CD4-positive, alpha-beta memory T cell (primary cell): ENCODE measurements at regions of chr1 and their contacts with region 1.

Region 1: GRCh38 chr1:28088168-28088961 is at the start of gene EYA3:
- DNase-seq: peak; percentile 98 to 100 (median 99)
- H3K4me3 ChIP-seq: peak within 1 kb of the TSS; percentile 93 to 99
- H3K4me3 Mint-ChIP-seq: peak within 1 kb of the TSS; percentile 93 to 98 (median 96)
- H3K27ac ChIP-seq: peak within 1 kb of the TSS; percentile 81
- H3K27ac Mint-ChIP-seq: peak within 1 kb of the TSS; percentile 87 to 99 (median 98)
- H3K4me1 ChIP-seq: peaks cover 33% of the 10 kb centered on the region
- H3K4me1 Mint-ChIP-seq: peaks cover 22 to 48% (median 36%) of the 10 kb centered on the region in 4 donors
- H3K27me3 ChIP-seq: no peaks in the 10 kb centered on the region
- H3K27me3 Mint-ChIP-seq: no peaks in the 10 kb centered on the region
- total RNA-seq, gene EYA3: 21.1 to 22.6 TPM

Region 2: GRCh38 chr1:27858072-27858958 is 230.1 kb before region 1 on chr1:
- CTCF ChIA-PET with region 1: no interaction called
- POLR2A ChIA-PET with region 1: interaction called, 3 read pairs
- intact Hi-C with region 1: loop called (anchors 2 kb)
- DNase-seq: peak; percentile 77 to 81 (median 79)
- H3K4me3 ChIP-seq: no peak overlapping the region
- H3K4me3 Mint-ChIP-seq: peak overlapping the region in 2 of 8 donors; percentile 16 to 43
- H3K27ac ChIP-seq: no peak overlapping the region
- H3K27ac Mint-ChIP-seq: peak overlapping the region in 3 of 7 donors; percentile 15 to 65 (median 43)
- H3K4me1 ChIP-seq: peaks cover 14% of the 10 kb centered on the region
- H3K4me1 Mint-ChIP-seq: peaks cover 13 to 28% (median 17%) of the 10 kb centered on the region in 4 donors
- H3K27me3 ChIP-seq: no peaks in the 10 kb centered on the region
- H3K27me3 Mint-ChIP-seq: no peaks in the 10 kb centered on the region

Region 3: GRCh38 chr1:28102189-28102588 is 13.8 kb after region 1 on chr1:
- CTCF ChIA-PET with region 1: interaction called, 12 read pairs
- POLR2A ChIA-PET with region 1: no interaction called
- intact Hi-C with region 1: no loop called
- DNase-seq: no peak
- H3K4me3 ChIP-seq: no peak overlapping the region
- H3K4me3 Mint-ChIP-seq: no peak overlapping the region
- H3K27ac ChIP-seq: no peak overlapping the region
- H3K27ac Mint-ChIP-seq: no peak overlapping the region
- H3K4me1 ChIP-seq: no peaks in the 10 kb centered on the region
- H3K4me1 Mint-ChIP-seq: no peaks in the 10 kb centered on the region
- H3K27me3 ChIP-seq: no peaks in the 10 kb centered on the region
- H3K27me3 Mint-ChIP-seq: no peaks in the 10 kb centered on the region

Region 4: DNA sequence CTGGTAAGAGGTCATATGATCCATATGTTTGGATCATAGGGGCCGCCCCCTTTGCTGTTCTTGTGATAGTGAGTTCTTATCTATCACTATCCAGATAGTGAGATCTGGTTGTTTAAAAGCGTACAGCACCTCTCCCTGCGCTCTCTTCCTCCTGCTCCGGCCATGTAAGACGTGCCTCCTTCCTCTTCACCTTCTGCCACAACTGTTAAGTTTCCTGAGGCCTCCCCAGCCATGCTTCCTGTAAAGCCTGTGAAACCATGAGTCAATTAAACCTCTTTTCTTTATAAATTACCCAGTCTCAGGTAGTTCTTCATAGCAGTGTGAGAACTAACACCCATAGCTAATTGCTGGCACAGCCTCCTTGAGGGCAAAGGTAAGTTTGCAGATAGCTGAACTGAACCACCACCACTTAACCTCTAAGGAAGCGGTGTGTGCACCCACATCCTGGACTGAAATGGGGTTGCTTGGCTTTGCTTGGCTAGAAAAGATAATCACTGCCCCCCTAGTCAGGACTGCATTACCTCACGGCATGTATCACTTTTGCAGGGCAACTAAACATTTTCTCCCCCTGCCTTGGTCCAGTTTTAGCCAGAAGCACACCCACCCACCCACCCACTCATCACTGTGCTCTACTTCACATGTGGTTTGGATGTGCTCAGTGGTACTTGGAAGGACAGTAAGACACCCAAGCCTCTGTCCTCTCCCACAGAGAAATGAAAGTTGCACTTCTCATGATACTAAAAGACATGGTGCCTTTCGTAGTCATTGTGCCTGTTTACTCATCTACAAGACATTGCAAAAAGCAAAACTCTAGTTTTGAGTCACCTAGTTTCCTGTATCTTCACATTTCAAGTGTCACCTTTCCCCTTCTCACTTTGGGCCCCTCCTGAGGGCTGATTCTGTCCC is 111.2 kb after region 1 on chr1:
- CTCF ChIA-PET with region 1: interaction called, 9 read pairs
- POLR2A ChIA-PET with region 1: interaction called, 9 read pairs
- intact Hi-C with region 1: loop called (anchors 1 kb)
- DNase-seq: peak; percentile 76 to 82 (median 80)
- H3K4me3 ChIP-seq: no peak overlapping the region
- H3K4me3 Mint-ChIP-seq: peak overlapping the region; percentile 38 to 86 (median 78)
- H3K27ac ChIP-seq: peak overlapping the region; percentile 8
- H3K27ac Mint-ChIP-seq: peak overlapping the region; percentile 43 to 95 (median 84)
- H3K4me1 ChIP-seq: peaks cover 49% of the 10 kb centered on the region
- H3K4me1 Mint-ChIP-seq: peaks cover 29 to 47% (median 41%) of the 10 kb centered on the region in 4 donors
- H3K27me3 ChIP-seq: no peaks in the 10 kb centered on the region
- H3K27me3 Mint-ChIP-seq: no peaks in the 10 kb centered on the region

Region 5: GRCh38 chr1:28208818-28209441 is 120.6 kb after region 1 on chr1:
- CTCF ChIA-PET with region 1: interaction called, 90 read pairs
- POLR2A ChIA-PET with region 1: interaction called, 12 read pairs
- intact Hi-C with region 1: loop called (anchors 1 kb)
- DNase-seq: peak; percentile 63 to 69 (median 65)
- H3K4me3 ChIP-seq: no peak overlapping the region
- H3K4me3 Mint-ChIP-seq: no peak overlapping the region
- H3K27ac ChIP-seq: no peak overlapping the region
- H3K27ac Mint-ChIP-seq: peak overlapping the region in 2 of 7 donors; percentile 20 to 44
- H3K4me1 ChIP-seq: no peaks in the 10 kb centered on the region
- H3K4me1 Mint-ChIP-seq: peaks cover 8 to 10% (median 9%) of the 10 kb centered on the region in 4 donors
- H3K27me3 ChIP-seq: no peaks in the 10 kb centered on the region
- H3K27me3 Mint-ChIP-seq: no peaks in the 10 kb centered on the region

Region 6: GRCh38 chr1:28235755-28236655 is 147.6 kb after region 1 on chr1 and contains the start of gene ATP5IF1:
- CTCF ChIA-PET with region 1: interaction called, 4 read pairs
- POLR2A ChIA-PET with region 1: interaction called, 10 read pairs
- intact Hi-C with region 1: no loop called
- DNase-seq: peak; percentile 92 to 97 (median 95)
- H3K4me3 ChIP-seq: peak within 1 kb of the TSS; percentile 82 to 97
- H3K4me3 Mint-ChIP-seq: peak within 1 kb of the TSS in 2 of 8 donors; percentile 35 to 57
- H3K27ac ChIP-seq: peak within 1 kb of the TSS; percentile 86
- H3K27ac Mint-ChIP-seq: peak within 1 kb of the TSS in 1 of 7 donors; percentile 18
- H3K4me1 ChIP-seq: peaks cover 56% of the 10 kb centered on the region
- H3K4me1 Mint-ChIP-seq: peaks cover 8 to 30% (median 13%) of the 10 kb centered on the region in 4 donors
- H3K27me3 ChIP-seq: no peaks in the 10 kb centered on the region
- H3K27me3 Mint-ChIP-seq: no peaks in the 10 kb centered on the region
- total RNA-seq, gene ATP5IF1: 111 TPM